A673 (cell line): ENCODE measurements at regions of chr3 and their contacts with region 1.

Region 1: GRCh38 chr3:184525337-184526087 is 36.1 kb upstream of the EPHB3 start:
- DNase-seq: no peak
- H3K4me3 ChIP-seq: peak overlapping the region; percentile 47
- H3K27ac ChIP-seq: no peak overlapping the region
- H3K4me1 ChIP-seq: peaks cover 10% of the 10 kb centered on the region
- H3K27me3 ChIP-seq: peaks cover 81% of the 10 kb centered on the region
- CTCF ChIP-seq: no peak

Region 2: GRCh38 chr3:184459355-184459754 is 66.2 kb before region 1 on chr3:
- CTCF ChIA-PET with region 1: interaction called, 17 read pairs
- POLR2A ChIA-PET with region 1: no interaction called
- intact Hi-C with region 1: no loop called
- DNase-seq: no peak
- H3K4me3 ChIP-seq: no peak overlapping the region
- H3K27ac ChIP-seq: no peak overlapping the region
- H3K4me1 ChIP-seq: no peaks in the 10 kb centered on the region
- H3K27me3 ChIP-seq: no peaks in the 10 kb centered on the region
- CTCF ChIP-seq: no peak